Activated CD8-positive, alpha-beta T cell treated with anti-CD3 and anti-CD28 coated beads for 36 hours (primary cell): ENCODE measurements at regions of chr20 and their contacts with region 1.

Region 1: DNA sequence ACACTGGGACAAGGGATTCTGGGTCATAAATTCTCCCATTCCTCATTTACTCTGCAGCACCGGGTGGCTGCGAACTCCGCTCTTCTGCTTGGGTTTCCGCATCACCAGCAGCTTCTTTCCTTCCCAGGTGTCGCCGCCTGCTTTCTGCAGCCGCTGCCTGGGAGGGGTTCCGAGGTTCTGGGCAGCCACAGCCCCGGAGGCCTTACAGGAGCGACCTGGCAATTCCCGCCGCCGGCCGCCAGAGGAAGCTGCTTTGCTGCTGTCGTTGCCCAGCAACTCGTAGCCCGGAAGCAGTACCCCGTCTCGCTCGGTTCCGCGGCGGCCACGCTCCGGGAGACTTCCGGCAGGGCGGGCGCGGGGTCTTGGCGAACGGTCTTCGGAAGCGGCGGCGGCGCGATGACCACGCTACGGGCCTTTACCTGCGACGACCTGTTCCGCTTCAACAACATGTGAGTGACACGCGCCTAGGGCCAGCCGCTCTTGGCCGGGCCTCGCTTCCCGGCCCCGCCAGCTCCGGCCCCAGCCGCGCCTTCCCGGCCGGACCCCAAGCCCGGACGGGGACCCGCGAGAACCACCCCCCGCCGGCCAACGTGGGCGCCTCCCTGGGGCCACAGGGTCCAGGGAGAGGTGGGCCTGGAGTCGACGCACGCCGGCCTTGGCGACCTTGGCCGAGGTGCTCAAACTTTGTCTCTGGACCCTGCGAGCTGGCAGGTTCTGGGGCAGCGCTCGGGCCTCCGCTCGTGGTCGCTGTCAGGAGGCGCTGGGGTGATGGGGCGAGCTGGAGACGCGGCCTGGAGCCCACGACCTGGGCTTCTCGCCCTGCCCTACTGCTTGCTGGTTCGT is at the start of gene NAA20:
- DNase-seq: peak; percentile 94
- ATAC-seq: peak; percentile 96
- H3K4me3 Mint-ChIP-seq: peak within 1 kb of the TSS; percentile 85
- H3K27ac Mint-ChIP-seq: peak within 1 kb of the TSS; percentile 84
- H3K4me1 Mint-ChIP-seq: peaks cover 51% of the 10 kb centered on the region
- H3K27me3 Mint-ChIP-seq: no peaks in the 10 kb centered on the region
- CTCF ChIP-seq: peak; percentile 44
- total RNA-seq, gene NAA20: 99.8 to 100 TPM

Region 2: GRCh38 chr20:20027284-20027683 is 10.1 kb after region 1 on chr20:
- CTCF ChIA-PET with region 1: interaction called, 11 read pairs
- POLR2A ChIA-PET with region 1: interaction called, 5 read pairs
- intact Hi-C with region 1: no loop called
- DNase-seq: no peak
- ATAC-seq: no peak
- H3K4me3 Mint-ChIP-seq: no peak overlapping the region
- H3K27ac Mint-ChIP-seq: no peak overlapping the region
- H3K4me1 Mint-ChIP-seq: peaks cover 27% of the 10 kb centered on the region
- H3K27me3 Mint-ChIP-seq: no peaks in the 10 kb centered on the region
- CTCF ChIP-seq: no peak